ENCODE measurements at regions of chr1 and their contacts with region 1.

Region 1: GRCh38 chr1:203038891-203039608 is 12.8 kb downstream of the PPFIA4 start:
- DNase-seq: peak; percentile 77
- H3K4me3 Mint-ChIP-seq: no peak overlapping the region
- H3K27ac Mint-ChIP-seq: no peak overlapping the region
- H3K4me1 Mint-ChIP-seq: peaks cover 9% of the 10 kb centered on the region
- H3K27me3 Mint-ChIP-seq: peaks cover 16% of the 10 kb centered on the region

Region 2: DNA sequence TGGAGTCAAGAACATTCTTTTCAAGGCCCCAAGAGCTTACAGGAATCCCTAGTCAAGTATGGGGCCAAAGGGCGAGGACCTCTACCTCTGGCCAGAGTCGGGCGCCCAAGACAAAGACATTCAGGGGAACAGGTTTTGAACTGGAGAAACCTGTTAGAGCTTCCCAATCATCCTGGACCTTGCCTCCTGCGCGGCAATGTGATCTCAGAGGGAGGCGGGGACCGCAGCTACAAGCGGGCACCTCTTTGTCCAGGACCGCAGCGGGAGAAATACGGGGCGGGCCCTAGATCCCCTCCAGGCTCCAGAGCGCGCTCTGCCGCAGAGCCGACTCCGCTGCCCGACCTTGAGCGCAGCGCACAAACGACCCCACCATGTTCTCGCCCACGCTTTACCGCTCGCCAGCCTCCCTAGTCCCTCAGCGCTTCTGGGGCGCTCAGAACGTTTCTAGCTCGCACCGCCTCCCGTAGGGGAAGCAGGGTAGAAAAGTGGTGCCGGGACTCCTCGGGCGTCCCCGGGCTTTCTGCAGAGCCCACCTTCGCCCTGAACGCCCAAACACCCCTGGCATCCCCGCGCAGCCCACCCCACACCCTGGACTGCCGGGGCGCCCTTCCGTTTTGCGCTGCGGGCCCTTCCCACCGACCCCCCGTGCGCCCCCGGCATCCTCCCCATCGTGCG is 178.2 kb before region 1 on chr1:
- CTCF ChIA-PET with region 1: no interaction called
- DNase-seq: peak; percentile 46
- H3K4me3 Mint-ChIP-seq: peak overlapping the region; percentile 71
- H3K27ac Mint-ChIP-seq: no peak overlapping the region
- H3K4me1 Mint-ChIP-seq: peaks cover 14% of the 10 kb centered on the region
- H3K27me3 Mint-ChIP-seq: peaks cover 85% of the 10 kb centered on the region

Region 3: GRCh38 chr1:202938287-202938925 is 100.6 kb before region 1 on chr1:
- CTCF ChIA-PET with region 1: no interaction called
- DNase-seq: no peak
- H3K4me3 Mint-ChIP-seq: no peak overlapping the region
- H3K27ac Mint-ChIP-seq: no peak overlapping the region
- H3K4me1 Mint-ChIP-seq: no peaks in the 10 kb centered on the region
- H3K27me3 Mint-ChIP-seq: peaks cover 23% of the 10 kb centered on the region

Region 4: GRCh38 chr1:203026031-203026989 is 12.7 kb before region 1 on chr1 and contains the start of gene PPFIA4:
- CTCF ChIA-PET with region 1: interaction called, 64 read pairs
- DNase-seq: peak; percentile 90
- H3K4me3 Mint-ChIP-seq: peak within 1 kb of the TSS; percentile 86
- H3K27ac Mint-ChIP-seq: peak within 1 kb of the TSS; percentile 70
- H3K4me1 Mint-ChIP-seq: peaks cover 21% of the 10 kb centered on the region
- H3K27me3 Mint-ChIP-seq: peaks cover 23% of the 10 kb centered on the region

Region 5: GRCh38 chr1:203057911-203058675 is 19.0 kb after region 1 on chr1:
- CTCF ChIA-PET with region 1: interaction called, 44 read pairs
- DNase-seq: no peak
- H3K4me3 Mint-ChIP-seq: no peak overlapping the region
- H3K27ac Mint-ChIP-seq: no peak overlapping the region
- H3K4me1 Mint-ChIP-seq: no peaks in the 10 kb centered on the region
- H3K27me3 Mint-ChIP-seq: peaks cover 3% of the 10 kb centered on the region

Region 6: GRCh38 chr1:203126151-203126870 is 87.3 kb after region 1 on chr1:
- CTCF ChIA-PET with region 1: interaction called, 10 read pairs
- DNase-seq: no peak
- H3K4me3 Mint-ChIP-seq: no peak overlapping the region
- H3K27ac Mint-ChIP-seq: no peak overlapping the region
- H3K4me1 Mint-ChIP-seq: peaks cover 9% of the 10 kb centered on the region
- H3K27me3 Mint-ChIP-seq: peaks cover 93% of the 10 kb centered on the region

Region 7: GRCh38 chr1:203216274-203217138 is 177.5 kb after region 1 on chr1:
- CTCF ChIA-PET with region 1: interaction called, 122 read pairs
- DNase-seq: peak; percentile 66
- H3K4me3 Mint-ChIP-seq: no peak overlapping the region
- H3K27ac Mint-ChIP-seq: no peak overlapping the region
- H3K4me1 Mint-ChIP-seq: no peaks in the 10 kb centered on the region
- H3K27me3 Mint-ChIP-seq: peaks cover 56% of the 10 kb centered on the region